Dendritic cell treated with granulocyte-macrophage colony-stimulating factor and Interleukin-4, amounts not matched to agents 40 ng/mL and 50 ng/mL, for 4 days (primary cell): ENCODE measurements at regions of chr4 and their contacts with region 1.

Region 1: GRCh38 chr4:89307446-89308160 is at the start of gene GPRIN3:
- H3K4me3 Mint-ChIP-seq: peak within 1 kb of the TSS; percentile 85
- H3K27ac Mint-ChIP-seq: peak within 1 kb of the TSS; percentile 85
- H3K4me1 Mint-ChIP-seq: peaks cover 46% of the 10 kb centered on the region
- H3K27me3 Mint-ChIP-seq: peaks cover 2% of the 10 kb centered on the region

Region 2: GRCh38 chr4:89039730-89040338 is 267.8 kb before region 1 on chr4:
- intact Hi-C with region 1: no loop called
- H3K4me3 Mint-ChIP-seq: no peak overlapping the region
- H3K27ac Mint-ChIP-seq: no peak overlapping the region
- H3K4me1 Mint-ChIP-seq: peaks cover 4% of the 10 kb centered on the region
- H3K27me3 Mint-ChIP-seq: no peaks in the 10 kb centered on the region

Region 3: GRCh38 chr4:89110986-89111832 is 196.4 kb before region 1 on chr4 and contains the start of gene TIGD2:
- intact Hi-C with region 1: loop called (anchors 10 kb)
- H3K4me3 Mint-ChIP-seq: peak within 1 kb of the TSS; percentile 93
- H3K27ac Mint-ChIP-seq: peak within 1 kb of the TSS; percentile 92
- H3K4me1 Mint-ChIP-seq: peaks cover 21% of the 10 kb centered on the region
- H3K27me3 Mint-ChIP-seq: peaks cover 32% of the 10 kb centered on the region

Region 4: GRCh38 chr4:89331686-89332544 is 24.3 kb after region 1 on chr4:
- intact Hi-C with region 1: no loop called
- H3K4me3 Mint-ChIP-seq: peak overlapping the region; percentile 61
- H3K27ac Mint-ChIP-seq: peak overlapping the region; percentile 91
- H3K4me1 Mint-ChIP-seq: peaks cover 65% of the 10 kb centered on the region
- H3K27me3 Mint-ChIP-seq: no peaks in the 10 kb centered on the region